MCF 10A (cell line): ENCODE measurements at regions of chr17 and their contacts with region 1.

Region 1: DNA sequence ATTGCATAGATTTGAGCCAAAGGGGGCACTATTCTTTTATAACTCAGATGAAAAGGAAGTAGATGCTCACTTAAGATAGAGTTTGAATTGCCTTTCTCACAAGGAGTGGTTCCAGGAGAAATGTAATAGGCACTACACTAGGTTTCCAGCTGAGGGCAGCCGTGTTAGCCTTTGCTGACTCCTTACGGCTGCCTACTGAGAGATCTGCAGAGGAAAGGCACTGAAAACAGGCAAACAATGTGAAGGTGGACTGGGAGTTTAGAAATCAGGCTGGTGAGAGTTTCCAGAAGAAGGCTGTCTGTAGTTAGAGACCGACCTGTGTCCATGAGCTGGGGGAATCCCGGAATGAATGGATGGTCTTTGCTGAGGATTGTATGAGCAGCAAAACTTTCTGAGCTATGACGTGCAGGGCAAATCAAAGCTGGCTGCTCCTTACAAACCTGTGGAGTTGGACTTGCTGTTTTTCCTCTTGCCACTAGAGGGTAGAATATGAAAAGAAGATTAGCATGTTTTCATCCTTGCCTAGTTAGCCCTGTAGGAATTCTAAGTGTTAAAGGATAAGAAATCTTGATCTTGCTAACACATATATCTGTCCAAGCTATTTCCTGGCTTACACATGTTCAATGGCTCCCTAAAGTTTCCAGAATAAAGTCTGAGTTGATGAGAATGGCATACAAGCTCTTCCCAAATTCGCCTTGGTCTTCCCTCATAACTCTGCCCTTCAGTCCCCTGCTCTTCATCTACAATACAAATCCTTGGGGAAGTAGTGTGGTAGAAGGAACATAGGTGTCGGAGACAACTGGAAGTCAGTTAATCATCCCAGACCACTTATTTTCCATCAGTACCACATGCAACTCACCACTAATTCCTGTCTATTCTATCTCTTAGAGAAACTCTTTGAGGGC is 20.1 kb upstream of the TAOK1 start:
- DNase-seq: peak; percentile 82
- H3K4me3 Mint-ChIP-seq: no peak overlapping the region
- H3K27ac Mint-ChIP-seq: no peak overlapping the region
- H3K4me1 Mint-ChIP-seq: no peaks in the 10 kb centered on the region
- H3K27me3 Mint-ChIP-seq: no peaks in the 10 kb centered on the region
- CTCF ChIP-seq: peak; percentile 47

Region 2: DNA sequence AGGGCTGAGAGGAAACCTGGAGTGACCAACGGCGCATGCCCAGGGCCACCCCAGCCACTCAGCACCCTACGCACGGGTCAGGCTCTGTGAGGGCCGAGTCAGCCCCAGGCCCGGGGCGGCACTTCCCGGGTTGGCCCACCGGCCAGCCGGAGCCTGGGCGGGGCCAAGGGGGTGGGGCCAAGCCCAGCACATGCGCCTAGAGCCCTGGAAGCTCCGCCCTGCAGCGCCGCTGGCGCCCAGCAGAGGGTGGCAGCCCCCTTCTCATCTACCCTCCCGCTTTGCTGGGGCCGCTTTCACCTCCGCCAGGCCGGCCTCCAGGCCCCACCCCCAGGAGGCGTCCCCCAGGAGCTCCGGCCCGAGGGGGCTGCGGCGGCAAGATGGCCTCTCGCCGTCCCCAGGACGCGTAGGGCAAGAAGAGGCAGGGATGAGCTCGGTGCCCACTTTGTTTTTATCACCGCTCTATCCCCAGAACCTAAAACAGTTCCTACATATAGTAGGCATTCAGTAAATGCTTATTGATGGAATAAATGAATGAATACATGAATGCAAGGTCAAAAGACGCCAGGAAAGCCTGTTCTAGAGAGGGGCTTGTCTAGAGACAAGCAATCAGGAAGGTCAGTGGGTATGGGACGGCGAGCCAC is 221.2 kb before region 1 on chr17:
- CTCF ChIA-PET with region 1: interaction called, 3 read pairs
- POLR2A ChIA-PET with region 1: no interaction called
- intact Hi-C with region 1: loop called (anchors 5 kb)
- DNase-seq: peak; percentile 92
- H3K4me3 Mint-ChIP-seq: peak overlapping the region; percentile 61
- H3K27ac Mint-ChIP-seq: peak overlapping the region; percentile 85
- H3K4me1 Mint-ChIP-seq: peaks cover 60% of the 10 kb centered on the region
- H3K27me3 Mint-ChIP-seq: no peaks in the 10 kb centered on the region
- CTCF ChIP-seq: peak; percentile 98

Region 3: DNA sequence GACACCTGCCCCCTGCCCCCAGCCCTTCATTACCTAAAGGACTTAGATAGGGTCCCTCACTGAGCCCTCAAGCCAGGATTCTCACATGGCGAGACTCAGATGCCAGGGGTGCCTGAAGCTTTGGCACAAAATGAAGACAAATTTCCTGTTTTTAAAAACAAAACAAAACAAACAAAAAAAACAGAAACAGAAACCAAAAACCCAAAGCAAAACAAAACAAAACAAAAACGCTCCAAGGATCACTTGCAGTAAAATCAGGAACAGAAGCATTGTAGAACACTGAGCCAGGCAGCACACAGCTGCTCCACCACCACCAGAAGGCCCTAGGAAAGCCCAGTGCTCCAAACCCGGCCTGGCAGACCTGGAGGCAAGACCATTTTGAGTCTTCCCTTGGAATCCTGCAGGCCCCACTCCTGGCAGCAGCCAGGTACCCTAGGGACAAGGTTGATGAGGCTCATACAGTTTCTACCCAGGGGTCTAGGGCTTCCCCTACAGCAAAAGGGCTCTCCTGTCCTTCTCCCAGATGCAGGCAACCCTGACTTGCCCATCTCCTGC is 210.7 kb before region 1 on chr17:
- CTCF ChIA-PET with region 1: no interaction called
- POLR2A ChIA-PET with region 1: no interaction called
- intact Hi-C with region 1: no loop called
- DNase-seq: no peak
- H3K4me3 Mint-ChIP-seq: no peak overlapping the region
- H3K27ac Mint-ChIP-seq: peak overlapping the region; percentile 19
- H3K4me1 Mint-ChIP-seq: peaks cover 44% of the 10 kb centered on the region
- H3K27me3 Mint-ChIP-seq: no peaks in the 10 kb centered on the region
- CTCF ChIP-seq: no peak

Region 4: DNA sequence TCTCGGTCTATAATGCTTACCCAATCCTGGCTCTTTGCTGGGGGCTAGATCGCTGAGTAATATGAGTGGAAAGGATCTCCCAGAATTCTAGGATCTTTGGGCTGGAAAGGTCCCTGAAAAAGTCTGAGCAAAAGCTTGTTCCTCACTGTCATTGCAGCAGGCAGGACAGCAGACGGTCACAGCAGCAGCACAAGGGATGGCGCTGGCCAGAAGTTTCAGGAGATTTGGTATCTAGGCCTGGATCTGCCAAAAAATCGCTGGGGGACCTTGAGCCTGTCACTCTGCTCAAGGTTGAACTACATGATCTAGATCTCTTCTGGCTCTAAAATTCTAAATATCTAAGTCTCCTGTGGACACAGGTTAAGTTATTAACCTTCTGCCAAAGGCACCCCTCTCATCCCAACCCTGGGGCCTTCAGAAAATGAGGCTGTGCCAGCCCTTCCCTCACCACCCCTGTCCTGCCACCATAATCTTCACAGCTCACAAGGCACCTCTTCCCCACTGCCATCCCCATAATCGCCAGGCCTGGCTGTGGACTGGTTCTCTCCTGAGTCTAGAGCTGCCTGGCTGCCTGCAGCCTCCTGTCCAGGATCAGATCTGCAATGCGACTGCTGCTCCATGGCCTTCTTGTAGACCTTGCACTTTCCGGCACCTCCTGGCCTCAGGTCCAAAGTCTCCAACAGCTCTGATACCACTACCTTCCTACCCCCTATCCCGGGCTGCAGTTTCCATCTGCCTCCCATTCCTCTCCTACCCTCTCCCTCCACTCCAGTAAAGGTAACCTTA is 200.1 kb before region 1 on chr17:
- CTCF ChIA-PET with region 1: no interaction called
- POLR2A ChIA-PET with region 1: no interaction called
- intact Hi-C with region 1: no loop called
- DNase-seq: no peak
- H3K4me3 Mint-ChIP-seq: no peak overlapping the region
- H3K27ac Mint-ChIP-seq: no peak overlapping the region
- H3K4me1 Mint-ChIP-seq: peaks cover 6% of the 10 kb centered on the region
- H3K27me3 Mint-ChIP-seq: no peaks in the 10 kb centered on the region
- CTCF ChIP-seq: no peak

Region 5: DNA sequence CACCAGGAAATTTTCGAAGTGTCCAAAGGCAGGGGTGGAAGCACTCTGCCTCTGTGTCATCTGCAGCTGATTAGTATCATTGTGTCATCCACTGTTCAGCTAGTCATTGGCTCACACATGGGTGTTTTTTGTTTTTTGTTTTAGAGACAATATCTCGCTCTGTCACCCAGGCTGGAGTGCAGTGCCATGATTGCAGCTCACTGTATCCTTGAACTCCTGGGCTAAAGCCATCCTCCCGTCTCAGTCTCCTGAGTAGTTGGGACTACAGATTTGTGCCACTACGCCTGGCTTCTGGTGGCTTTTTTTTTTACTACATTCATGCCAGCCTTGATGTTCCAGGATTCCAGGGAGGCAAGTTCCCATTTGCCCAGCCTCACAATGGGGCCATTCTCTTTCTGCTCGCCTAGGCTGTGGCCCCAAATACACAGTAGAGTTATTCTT is 157.4 kb before region 1 on chr17:
- CTCF ChIA-PET with region 1: no interaction called
- POLR2A ChIA-PET with region 1: no interaction called
- intact Hi-C with region 1: no loop called
- DNase-seq: no peak
- H3K4me3 Mint-ChIP-seq: no peak overlapping the region
- H3K27ac Mint-ChIP-seq: no peak overlapping the region
- H3K4me1 Mint-ChIP-seq: peaks cover 23% of the 10 kb centered on the region
- H3K27me3 Mint-ChIP-seq: no peaks in the 10 kb centered on the region
- CTCF ChIP-seq: no peak

Region 6: DNA sequence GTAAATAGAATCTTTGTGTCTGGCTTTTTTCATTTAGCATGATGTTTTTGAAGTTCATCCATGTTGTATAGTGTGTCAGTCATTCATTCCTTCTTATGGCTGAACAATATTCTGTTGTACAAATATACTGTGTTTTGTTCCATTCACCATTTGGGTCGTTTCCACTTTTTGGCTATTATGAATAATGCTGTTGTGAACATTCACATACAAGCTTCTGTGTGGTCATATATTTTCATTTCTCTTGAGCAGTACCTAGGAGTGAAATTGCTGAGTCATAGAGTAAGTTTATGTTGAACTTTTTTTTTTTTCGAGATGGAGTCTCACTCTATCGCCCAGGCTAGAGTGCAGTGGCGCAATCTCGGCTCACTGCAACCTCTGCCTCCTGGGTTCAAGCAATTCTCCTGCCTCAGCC is 12.3 kb before region 1 on chr17:
- CTCF ChIA-PET with region 1: interaction called, 12 read pairs
- POLR2A ChIA-PET with region 1: no interaction called
- intact Hi-C with region 1: no loop called
- DNase-seq: peak; percentile 37
- H3K4me3 Mint-ChIP-seq: no peak overlapping the region
- H3K27ac Mint-ChIP-seq: no peak overlapping the region
- H3K4me1 Mint-ChIP-seq: no peaks in the 10 kb centered on the region
- H3K27me3 Mint-ChIP-seq: no peaks in the 10 kb centered on the region
- CTCF ChIP-seq: no peak

Region 7: DNA sequence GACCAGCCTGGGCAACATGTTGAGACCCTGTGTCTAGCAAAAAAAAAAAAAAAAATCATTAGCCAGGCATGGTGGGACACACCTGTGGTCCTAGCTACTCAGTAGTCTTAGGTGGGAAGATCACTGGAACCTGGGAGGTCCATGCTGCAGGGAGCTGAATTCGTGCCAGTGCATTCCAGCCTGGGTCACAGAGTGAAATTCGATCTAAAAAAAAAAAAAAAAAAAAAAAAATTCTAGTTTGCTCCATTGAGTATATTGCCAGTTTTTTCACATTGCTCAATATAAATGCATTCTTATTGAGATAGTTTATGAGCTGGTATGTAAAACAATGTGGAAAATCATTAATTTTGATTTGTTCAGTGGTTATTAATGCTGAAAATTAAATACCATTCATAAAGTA is 144.7 kb after region 1 on chr17:
- CTCF ChIA-PET with region 1: interaction called, 11 read pairs
- POLR2A ChIA-PET with region 1: interaction called, 4 read pairs
- intact Hi-C with region 1: no loop called
- DNase-seq: no peak
- H3K4me3 Mint-ChIP-seq: no peak overlapping the region
- H3K27ac Mint-ChIP-seq: no peak overlapping the region
- H3K4me1 Mint-ChIP-seq: no peaks in the 10 kb centered on the region
- H3K27me3 Mint-ChIP-seq: no peaks in the 10 kb centered on the region
- CTCF ChIP-seq: no peak

Region 8: DNA sequence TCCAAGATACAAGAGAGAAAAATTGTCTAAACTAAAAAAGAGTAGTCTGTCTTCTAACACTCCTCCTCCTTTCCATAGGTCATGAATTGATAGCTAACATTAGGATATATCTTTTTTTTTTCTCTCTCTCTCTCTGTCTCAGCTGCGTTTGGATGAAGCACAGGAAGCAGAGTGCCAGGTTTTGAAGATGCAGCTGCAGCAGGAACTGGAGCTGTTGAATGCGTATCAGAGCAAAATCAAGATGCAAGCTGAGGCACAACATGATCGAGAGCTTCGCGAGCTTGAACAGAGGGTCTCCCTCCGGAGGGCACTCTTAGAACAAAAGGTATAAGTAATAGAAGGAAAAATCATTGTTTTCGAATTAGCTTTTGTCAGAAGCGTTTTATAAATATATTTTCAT is 163.9 kb after region 1 on chr17:
- CTCF ChIA-PET with region 1: interaction called, 52 read pairs
- POLR2A ChIA-PET with region 1: interaction called, 9 read pairs
- intact Hi-C with region 1: loop called (anchors 1 kb)
- DNase-seq: no peak
- H3K4me3 Mint-ChIP-seq: no peak overlapping the region
- H3K27ac Mint-ChIP-seq: no peak overlapping the region
- H3K4me1 Mint-ChIP-seq: no peaks in the 10 kb centered on the region
- H3K27me3 Mint-ChIP-seq: no peaks in the 10 kb centered on the region
- CTCF ChIP-seq: no peak

Region 9: DNA sequence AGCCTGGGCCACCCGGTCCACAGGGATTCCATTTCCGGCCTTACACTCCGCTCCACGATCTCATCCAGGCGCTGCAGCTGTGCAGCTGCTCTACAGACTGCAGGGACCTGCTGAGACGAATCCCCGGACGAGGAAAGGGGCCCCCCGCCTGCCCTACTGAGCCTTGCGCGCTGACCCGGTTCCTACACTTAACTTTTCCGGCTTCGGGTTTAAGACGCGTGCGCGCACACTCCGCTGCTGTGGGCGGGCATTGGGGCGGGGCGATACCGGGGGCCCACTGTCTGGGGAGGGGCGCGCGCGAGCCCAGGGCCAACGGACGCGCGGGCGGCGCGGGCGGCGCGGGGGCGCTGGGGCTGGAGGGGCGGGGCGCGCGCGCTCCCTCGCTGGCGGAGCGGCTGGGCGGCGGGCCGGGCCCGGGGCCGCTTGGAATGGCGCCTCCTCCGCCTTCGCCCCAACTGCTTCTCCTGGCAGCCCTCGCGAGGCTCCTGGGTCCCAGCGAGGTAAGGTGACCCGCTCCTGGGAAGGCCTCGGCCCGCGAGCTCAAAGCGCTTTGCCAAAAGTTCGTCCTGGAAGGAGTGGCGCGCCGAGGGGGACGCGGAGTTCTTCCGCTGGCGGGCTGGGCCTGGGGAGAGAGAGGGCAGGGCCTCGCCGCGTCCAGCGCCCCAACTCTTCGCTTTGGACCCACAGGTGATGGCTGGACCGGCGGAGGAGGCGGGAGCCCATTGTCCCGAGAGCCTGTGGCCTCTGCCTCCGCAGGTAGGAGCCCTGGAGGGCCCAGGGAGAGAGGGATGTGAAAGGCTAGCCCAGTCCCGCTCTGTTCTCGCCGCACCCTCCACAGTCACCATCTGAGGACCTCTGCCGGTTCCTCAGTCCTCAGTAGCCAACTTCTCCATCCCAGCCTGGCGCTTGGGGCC is 198.5 kb after region 1 on chr17 and contains the start of gene TP53I13:
- CTCF ChIA-PET with region 1: interaction called, 7 read pairs
- POLR2A ChIA-PET with region 1: interaction called, 10 read pairs
- intact Hi-C with region 1: no loop called
- DNase-seq: peak; percentile 78
- H3K4me3 Mint-ChIP-seq: peak within 1 kb of the TSS; percentile 80
- H3K27ac Mint-ChIP-seq: peak within 1 kb of the TSS; percentile 78
- H3K4me1 Mint-ChIP-seq: peaks cover 14% of the 10 kb centered on the region
- H3K27me3 Mint-ChIP-seq: no peaks in the 10 kb centered on the region
- CTCF ChIP-seq: no peak
- total RNA-seq, gene TP53I13: 29.6 and 34.5 TPM in 2 replicates